ENCODE measurements at regions of chr10 and their contacts with region 1.

Region 1: DNA sequence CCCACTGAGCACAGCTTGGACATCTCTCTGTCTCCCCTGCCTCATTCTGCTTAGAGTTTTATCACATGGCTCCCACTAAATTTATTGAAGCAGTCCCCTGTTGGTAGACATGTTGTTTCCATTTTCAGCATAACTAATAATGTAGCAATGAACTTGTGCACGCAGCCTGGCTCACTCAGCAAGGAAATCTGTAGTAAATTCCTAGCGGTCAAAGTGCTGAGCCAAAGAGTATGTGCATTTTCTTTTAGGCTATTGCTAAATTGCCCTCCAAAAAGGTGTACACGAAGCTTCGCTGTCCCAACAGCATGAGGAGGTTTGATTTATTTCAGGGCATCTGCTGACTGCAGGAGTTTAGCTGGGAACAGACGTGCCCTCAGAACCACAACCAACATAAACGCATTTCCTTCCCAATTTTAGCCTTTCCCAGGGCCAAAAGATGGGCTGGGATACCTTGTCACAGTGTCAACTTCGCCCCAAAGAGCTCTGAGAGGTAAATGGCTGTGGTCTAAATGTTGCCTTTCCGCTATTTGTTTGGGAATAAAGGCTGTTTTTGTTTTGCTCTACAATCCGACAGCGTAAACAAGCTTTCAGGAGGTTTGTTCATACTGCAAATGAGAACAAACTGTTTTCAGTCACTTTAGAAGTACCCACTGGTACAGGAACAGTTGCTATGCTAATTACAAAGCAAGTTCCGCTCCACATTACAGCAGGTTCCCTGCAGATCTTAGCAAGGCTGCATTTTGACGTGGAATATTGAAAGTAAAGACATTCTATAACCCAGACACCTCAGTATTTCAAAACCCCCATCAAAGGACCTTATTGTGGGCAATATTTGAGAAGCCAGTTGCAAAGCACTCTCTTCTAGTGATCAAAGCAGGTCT is 16.8 kb downstream of the VSIR start:
- DNase-seq: no peak
- ATAC-seq: peak; percentile 53
- H3K4me3 Mint-ChIP-seq: peak overlapping the region; percentile 57
- H3K27ac Mint-ChIP-seq: peak overlapping the region; percentile 91
- H3K4me1 Mint-ChIP-seq: peaks cover 86% of the 10 kb centered on the region
- H3K27me3 Mint-ChIP-seq: no peaks in the 10 kb centered on the region

Region 2: GRCh38 chr10:71740069-71740468 is 16.5 kb before region 1 on chr10:
- CTCF ChIA-PET with region 1: interaction called, 17 read pairs
- POLR2A ChIA-PET with region 1: interaction called, 5 read pairs
- DNase-seq: no peak
- ATAC-seq: no peak
- H3K4me3 Mint-ChIP-seq: no peak overlapping the region
- H3K27ac Mint-ChIP-seq: peak overlapping the region; percentile 93
- H3K4me1 Mint-ChIP-seq: peaks cover 100% of the 10 kb centered on the region
- H3K27me3 Mint-ChIP-seq: no peaks in the 10 kb centered on the region

Region 3: DNA sequence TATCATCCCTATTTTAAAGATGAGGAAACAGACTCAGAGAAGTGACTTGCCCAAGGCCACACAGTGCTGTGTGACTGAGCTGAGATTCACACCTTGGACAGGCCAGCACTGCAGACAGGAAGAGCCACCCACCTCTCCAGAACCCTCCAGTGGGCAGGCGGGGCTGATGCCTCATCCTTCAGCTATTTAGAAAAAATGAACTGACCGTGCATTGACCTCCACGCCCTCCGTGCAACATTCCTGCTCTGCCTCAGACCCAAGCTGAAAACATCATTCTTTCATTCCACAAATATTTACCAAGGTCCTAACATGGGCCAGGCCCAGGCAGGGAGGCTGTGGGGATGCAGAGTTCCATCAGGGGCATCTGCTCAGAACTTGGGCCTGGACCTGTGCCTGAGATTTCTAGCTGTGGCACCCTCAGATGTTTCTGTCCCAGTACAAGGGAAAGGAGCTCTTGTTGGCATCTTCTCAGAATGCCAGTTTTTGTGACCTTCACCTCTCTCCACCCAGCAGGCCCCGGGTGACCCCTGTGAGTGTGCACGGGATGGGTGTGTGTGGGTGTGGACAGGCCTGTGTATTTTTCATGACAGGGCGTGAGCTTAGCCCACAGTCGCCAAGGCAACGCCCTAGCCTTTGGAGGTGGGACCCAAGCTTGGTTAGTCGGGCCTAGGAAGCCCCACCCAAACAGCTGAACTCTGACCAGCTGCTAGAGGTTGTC is 10.3 kb after region 1 on chr10:
- CTCF ChIA-PET with region 1: interaction called, 62 read pairs
- POLR2A ChIA-PET with region 1: interaction called, 30 read pairs
- DNase-seq: peak; percentile 50
- ATAC-seq: no peak
- H3K4me3 Mint-ChIP-seq: peak overlapping the region; percentile 3
- H3K27ac Mint-ChIP-seq: peak overlapping the region; percentile 82
- H3K4me1 Mint-ChIP-seq: peaks cover 92% of the 10 kb centered on the region
- H3K27me3 Mint-ChIP-seq: no peaks in the 10 kb centered on the region

Region 4: GRCh38 chr10:71795248-71795647 is 38.7 kb after region 1 on chr10:
- CTCF ChIA-PET with region 1: no interaction called
- POLR2A ChIA-PET with region 1: no interaction called
- DNase-seq: peak; percentile 54
- ATAC-seq: no peak
- H3K4me3 Mint-ChIP-seq: no peak overlapping the region
- H3K27ac Mint-ChIP-seq: no peak overlapping the region
- H3K4me1 Mint-ChIP-seq: peaks cover 36% of the 10 kb centered on the region
- H3K27me3 Mint-ChIP-seq: no peaks in the 10 kb centered on the region

Region 5: GRCh38 chr10:71812016-71812912 is 55.7 kb after region 1 on chr10:
- CTCF ChIA-PET with region 1: interaction called, 12 read pairs
- POLR2A ChIA-PET with region 1: no interaction called
- DNase-seq: peak; percentile 87
- ATAC-seq: peak; percentile 97
- H3K4me3 Mint-ChIP-seq: no peak overlapping the region
- H3K27ac Mint-ChIP-seq: peak overlapping the region; percentile 51
- H3K4me1 Mint-ChIP-seq: peaks cover 21% of the 10 kb centered on the region
- H3K27me3 Mint-ChIP-seq: no peaks in the 10 kb centered on the region

Region 6: DNA sequence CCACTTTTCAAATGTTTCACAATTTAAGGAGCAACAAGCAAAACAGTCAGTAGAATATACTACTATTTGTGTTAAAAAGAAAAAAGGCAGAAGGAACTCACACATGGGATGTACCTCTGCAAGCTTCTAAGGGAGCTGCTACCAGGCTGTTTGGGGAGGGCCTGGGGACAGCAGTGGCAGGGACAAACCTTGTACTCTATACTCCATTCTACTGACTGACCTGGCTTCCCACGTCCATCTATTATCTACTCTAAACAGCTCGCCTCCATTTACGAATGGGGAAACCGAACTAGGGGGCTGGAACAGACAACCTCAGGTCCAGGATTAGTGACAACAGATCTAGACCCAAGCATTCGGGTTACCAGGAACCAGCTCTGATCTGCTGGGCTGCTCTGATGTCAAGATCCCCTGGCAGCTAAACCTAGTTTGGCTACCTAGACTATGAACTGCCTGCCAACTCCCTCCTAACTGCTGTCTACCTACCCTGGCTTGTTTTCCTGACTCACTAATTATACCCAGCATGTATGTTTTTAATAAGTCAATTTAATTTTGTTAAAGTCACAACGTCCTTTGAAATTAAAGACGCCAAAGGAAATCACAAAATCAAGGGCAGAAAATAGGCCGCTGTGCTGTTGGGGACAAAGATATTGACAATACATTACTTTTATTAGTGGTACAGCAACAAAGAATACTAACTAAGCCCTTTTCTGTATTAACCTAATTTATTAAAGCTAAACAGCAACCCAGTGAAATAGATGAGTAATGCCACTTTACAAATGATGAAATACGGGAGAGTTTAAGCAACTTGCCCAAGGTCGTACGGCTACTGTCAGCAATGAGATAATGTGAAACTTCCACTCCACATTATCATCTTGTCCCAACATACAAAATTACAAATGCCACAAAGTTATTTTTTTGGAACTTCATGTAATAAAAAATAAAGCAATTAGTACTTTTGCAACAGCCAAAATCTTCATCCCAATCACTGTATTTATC is 89.2 kb after region 1 on chr10:
- CTCF ChIA-PET with region 1: no interaction called
- POLR2A ChIA-PET with region 1: no interaction called
- DNase-seq: no peak
- ATAC-seq: no peak
- H3K4me3 Mint-ChIP-seq: no peak overlapping the region
- H3K27ac Mint-ChIP-seq: no peak overlapping the region
- H3K4me1 Mint-ChIP-seq: peaks cover 61% of the 10 kb centered on the region
- H3K27me3 Mint-ChIP-seq: no peaks in the 10 kb centered on the region